AG04449 (cell line): ENCODE measurements at regions of chr22 and their contacts with region 1.

Region 1: DNA sequence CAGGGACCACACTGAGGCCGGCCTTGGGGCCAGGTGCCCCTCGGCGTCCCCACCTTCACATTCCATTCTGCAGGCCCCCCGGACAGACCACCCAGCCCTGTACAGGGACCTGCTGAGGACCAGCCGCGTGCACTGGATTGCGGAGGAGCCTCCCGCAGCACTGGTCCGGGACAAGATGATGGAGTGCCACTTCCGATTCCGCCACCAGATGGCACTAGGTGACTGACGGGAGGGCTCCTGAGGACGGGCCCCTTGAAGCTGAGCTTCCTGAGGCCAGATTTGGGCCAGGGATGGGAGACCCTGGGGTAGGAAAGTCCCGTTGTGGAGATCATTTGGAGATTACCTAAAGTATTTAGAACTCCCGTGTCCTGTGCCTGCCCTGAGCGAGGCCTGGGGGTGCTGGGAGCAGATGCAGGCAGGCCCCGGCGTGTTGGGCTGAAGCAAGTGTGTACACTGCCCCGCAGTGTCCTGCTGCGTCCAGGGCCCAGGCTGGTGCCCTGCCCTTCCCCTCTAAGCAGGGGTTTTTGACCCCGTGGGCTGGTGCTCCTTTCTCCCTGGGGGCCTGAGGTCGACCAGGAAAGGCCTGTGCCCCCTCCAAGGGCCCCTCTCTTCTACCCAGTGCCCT is 20.0 kb downstream of the TRMU start:
- DNase-seq: no peak
- H3K4me3 ChIP-seq: no peak overlapping the region
- CTCF ChIP-seq: peak; percentile 85

Region 2: DNA sequence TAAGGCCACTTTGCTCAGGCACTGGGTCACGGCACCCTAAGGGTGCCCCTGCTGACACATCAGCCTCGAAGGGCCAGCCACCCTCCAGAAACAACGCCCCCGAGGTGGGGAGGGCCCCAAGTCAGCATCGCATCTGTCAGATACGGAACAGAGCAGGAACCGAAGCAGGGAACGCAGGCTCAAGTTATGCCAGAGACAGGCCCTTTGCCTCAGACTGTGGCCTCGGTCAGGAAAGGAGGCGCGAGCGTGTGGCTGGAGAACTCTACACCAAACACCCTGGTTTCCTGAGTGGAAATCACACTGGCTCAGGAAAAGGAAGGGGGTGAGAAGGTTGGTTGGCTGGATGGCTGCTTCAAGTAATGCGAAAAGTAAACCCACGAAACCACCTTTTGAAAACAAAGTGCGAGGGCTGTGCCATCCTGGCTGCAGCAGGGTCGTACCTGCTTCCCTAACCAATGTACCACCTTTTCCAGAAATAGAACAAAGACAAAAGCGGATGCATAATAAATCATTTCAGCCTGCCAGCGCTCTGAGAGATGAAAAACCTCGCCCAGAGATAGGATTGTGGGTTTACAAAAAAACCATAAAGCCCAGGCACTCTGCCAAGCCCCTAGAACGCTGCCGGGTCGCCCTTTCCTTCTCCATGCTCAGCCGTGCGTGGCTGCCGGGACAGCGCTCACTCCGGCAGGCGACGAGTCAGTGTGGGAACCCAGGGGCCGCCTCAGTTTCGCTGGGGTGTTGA is 18.6 kb after region 1 on chr22:
- CTCF ChIA-PET with region 1: no interaction called
- POLR2A ChIA-PET with region 1: no interaction called
- DNase-seq: no peak
- H3K4me3 ChIP-seq: no peak overlapping the region
- CTCF ChIP-seq: no peak

Region 3: DNA sequence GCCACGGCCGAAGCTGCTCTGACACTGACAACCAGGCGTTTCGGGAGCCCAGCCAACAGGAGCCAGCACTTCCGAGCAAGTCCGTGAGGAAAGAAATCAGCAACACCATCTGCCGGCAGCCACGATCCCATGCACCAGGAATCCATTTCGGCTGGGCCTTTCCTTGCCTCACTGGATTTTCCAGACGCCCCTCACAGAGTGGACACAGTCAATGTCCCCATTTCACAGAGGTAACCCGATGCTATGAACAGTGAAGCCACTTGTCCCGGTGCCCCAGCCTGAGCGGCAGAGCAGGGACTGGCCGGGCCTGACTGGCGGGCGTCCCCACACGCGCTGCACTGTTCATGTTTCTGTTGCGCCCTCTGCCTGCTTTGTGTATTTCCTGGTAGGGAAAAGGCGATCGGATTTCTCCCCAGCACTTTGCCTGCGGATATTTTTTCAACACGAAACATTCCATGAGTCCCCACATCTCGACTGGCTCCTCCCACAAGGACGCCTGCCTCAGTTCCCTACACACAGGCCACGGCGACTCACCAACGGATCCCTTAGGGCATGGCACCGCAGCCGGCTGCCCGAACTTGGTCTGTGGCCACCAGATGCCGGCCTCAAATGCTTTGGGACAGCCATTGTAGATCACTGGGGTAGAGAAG is 35.3 kb after region 1 on chr22:
- CTCF ChIA-PET with region 1: interaction called, 10 read pairs
- POLR2A ChIA-PET with region 1: no interaction called
- DNase-seq: no peak
- H3K4me3 ChIP-seq: no peak overlapping the region
- CTCF ChIP-seq: peak; percentile 62

Region 4: DNA sequence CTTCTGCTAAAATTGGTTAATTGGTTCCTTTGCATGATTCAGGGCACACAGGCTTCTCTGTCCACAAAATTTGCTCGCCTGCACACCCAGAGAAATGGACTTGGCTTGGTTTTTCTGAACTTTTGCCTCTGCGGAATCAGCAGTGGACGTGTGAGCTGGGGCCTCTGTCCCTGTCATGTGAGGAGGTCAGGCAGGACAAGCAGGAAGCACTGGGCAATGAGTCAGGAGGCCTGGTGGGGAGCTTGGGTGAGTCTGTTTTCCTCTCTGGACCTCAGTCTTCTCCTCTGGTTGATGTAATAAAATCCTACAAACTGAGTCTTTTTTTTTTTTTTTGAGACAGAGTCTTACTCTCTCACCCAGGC is 192.4 kb after region 1 on chr22:
- CTCF ChIA-PET with region 1: interaction called, 53 read pairs
- POLR2A ChIA-PET with region 1: interaction called, 3 read pairs
- DNase-seq: peak; percentile 45
- H3K4me3 ChIP-seq: no peak overlapping the region
- CTCF ChIP-seq: no peak